ENCODE measurements at regions of chr4 and their contacts with region 1.

Region 1: DNA sequence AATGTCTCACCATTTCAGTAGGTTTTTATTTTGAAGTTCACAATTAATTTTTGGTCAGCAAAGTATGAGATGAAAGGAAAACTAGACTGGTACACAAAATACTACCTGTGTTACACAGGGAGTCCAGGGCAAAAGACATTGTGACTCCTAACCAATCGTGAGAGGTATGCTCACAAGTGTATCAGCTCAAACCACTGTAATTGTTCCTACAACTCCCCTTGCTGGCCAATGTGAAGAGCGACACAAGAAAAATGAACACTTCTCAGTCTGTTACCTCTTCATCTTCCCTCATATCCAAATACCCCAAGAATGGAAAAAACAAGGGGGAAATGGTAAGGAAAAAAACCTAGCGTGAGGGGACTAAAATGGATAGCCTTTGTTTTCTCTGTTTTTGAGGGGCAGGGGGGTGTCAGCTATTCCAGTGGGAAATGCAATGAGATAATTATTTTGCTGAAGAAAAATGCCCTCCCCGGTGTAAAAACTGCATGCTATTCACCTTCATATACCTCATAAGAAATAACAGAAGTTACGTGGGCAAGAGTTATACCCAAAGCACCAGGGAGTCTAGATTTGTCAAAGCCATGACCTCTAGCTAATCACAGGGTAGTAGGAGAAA is 30.6 kb upstream of the NSUN7 start:
- DNase-seq: peak; percentile 17
- ATAC-seq: peak; percentile 66
- H3K4me3 Mint-ChIP-seq: no peak overlapping the region
- H3K27ac Mint-ChIP-seq: peak overlapping the region; percentile 40
- H3K4me1 Mint-ChIP-seq: peaks cover 15% of the 10 kb centered on the region
- H3K27me3 Mint-ChIP-seq: no peaks in the 10 kb centered on the region

Region 2: DNA sequence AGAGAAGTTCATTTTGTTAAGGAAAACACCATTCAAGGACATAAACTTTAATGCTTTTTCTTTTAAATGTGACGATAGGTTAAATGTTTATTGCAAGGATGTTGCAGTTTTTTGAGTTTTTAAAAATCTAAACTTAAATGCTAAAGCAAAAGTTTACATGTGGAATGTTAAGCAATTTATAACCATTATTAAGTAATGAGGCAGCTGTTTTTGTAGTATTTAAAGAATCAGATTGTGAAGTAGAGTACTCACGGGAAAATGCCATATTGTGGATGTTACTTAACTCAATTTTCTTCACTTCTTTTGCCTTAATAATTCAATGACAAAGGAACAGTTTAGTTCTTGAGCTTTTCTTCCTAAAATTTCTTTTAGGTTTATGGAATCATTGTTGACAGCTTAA is 977.7 kb before region 1 on chr4:
- CTCF ChIA-PET with region 1: no interaction called
- POLR2A ChIA-PET with region 1: no interaction called
- intact Hi-C with region 1: no loop called
- DNase-seq: no peak
- ATAC-seq: no peak
- H3K4me3 Mint-ChIP-seq: no peak overlapping the region
- H3K27ac Mint-ChIP-seq: no peak overlapping the region
- H3K4me1 Mint-ChIP-seq: peaks cover 8% of the 10 kb centered on the region
- H3K27me3 Mint-ChIP-seq: no peaks in the 10 kb centered on the region

Region 3: DNA sequence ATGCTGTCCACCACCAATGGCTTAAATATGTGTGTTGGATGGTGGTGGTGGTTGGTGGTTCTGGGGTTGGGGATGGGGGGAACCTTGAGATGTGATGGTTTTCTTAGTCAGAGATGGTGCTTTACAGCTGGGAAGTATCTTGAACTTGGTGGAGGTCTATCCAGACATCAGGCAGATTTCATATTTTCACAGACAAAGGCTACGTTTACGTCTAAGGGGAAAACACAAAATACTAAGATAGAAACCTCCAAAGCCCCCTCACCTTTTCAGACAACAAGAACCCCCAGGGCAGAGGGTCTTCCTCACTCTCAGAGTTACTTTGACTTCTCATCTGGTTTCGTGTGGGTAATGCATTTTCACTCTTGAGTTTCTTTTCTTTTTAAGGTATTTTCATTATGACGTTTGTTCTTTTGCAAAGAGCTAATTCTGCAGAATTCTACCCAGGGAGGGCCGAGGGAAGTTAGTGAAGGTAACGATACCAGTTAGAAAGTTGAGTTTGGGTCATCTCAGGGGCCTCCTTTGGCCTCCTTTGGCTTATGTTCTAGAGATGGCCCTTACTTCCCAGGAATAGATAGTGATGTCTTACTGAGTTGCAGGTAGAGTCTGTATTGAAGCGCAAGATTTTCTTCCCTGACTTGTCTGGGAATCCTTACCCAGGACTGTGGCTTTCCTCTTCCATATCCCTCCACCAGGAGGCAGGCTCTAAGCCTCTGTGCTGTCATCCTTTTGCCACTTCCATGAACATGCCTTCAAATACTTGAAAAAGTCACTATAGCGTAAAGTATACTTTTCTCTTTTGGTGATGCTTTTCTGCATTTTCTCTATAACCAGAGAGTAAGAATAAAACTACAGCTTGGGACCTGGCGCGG is 490.4 kb before region 1 on chr4:
- CTCF ChIA-PET with region 1: no interaction called
- POLR2A ChIA-PET with region 1: no interaction called
- intact Hi-C with region 1: loop called in 1 of 2 experiments (anchors 5 kb)
- DNase-seq: peak; percentile 64
- ATAC-seq: peak; percentile 34
- H3K4me3 Mint-ChIP-seq: peak overlapping the region; percentile 61
- H3K27ac Mint-ChIP-seq: peak overlapping the region; percentile 96
- H3K4me1 Mint-ChIP-seq: peaks cover 93% of the 10 kb centered on the region
- H3K27me3 Mint-ChIP-seq: no peaks in the 10 kb centered on the region

Region 4: DNA sequence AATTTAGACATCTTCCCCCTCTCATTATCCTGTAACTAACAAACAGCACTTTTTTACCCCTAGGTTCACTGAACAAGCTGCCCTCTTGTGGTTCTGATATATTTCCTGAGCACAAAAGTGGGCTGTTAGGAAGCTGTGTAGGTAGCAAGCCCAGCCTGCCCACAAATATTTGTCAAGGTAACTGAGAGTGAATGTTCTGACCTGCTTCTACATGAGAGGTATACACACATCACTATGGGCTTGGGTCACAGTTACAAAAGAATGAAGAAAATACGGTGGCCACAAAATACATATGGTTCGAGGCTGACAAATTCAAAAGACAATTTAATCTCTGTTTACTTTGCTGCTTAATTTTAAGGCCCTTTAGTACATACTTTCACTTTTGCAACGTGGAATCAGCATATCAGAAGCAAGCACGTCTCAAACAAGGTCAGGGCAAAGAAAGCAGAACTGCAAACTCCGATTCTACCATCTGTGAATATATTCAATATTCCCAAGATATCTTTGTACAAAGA is 168.1 kb before region 1 on chr4:
- CTCF ChIA-PET with region 1: interaction called, 4 read pairs
- POLR2A ChIA-PET with region 1: no interaction called
- intact Hi-C with region 1: loop called (anchors 1 to 5 kb)
- DNase-seq: peak; percentile 20
- ATAC-seq: peak; percentile 48
- H3K4me3 Mint-ChIP-seq: peak overlapping the region; percentile 55
- H3K27ac Mint-ChIP-seq: peak overlapping the region; percentile 52
- H3K4me1 Mint-ChIP-seq: peaks cover 27% of the 10 kb centered on the region
- H3K27me3 Mint-ChIP-seq: no peaks in the 10 kb centered on the region

Region 5: DNA sequence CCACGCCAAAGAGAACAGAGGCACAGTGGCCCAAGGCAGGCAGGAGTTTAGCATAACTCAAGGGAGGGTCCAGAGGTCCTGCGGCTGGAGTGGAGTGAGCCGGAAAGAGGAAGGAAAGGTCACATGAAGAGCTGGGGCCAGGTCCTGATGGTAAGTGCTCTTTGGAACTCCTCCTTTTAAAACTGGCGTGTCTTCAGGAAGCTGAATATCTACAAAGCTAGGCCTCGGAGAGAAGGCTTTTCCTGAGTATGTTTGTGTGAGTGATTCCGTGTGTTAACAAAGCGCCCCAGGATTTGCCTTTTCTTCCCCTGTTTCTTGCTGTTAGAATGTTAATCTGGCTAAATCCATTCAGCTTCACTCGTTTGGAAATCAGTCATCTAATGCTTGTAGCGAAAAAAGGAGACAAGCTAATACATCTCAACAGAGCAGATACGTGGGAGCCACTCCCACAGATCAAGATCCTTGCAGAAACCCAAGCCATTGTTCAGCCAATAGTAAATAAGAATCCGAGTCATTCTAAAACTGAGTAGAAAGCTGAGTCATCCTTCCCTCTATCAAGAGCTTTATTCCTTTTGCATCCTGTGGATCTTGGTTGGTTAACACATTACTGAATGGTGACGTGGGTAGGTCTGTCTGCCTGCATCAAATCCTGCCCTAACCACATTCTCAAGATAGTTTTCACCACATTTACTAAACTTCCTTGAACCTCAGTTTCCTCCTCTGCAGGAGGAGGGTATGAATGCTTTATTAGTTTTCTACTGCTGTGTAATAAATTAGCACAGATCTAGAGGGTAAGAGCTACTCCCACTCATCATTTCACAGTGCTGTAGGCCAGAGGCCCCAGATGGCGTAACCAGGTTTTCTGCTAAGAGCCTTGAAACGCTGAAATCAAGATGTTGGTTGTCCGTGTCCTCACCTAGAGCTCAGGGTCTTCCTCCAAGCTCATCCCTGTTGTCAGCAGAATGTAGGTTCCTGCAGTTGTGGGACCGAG is 46.3 kb before region 1 on chr4:
- CTCF ChIA-PET with region 1: interaction called, 16 read pairs
- POLR2A ChIA-PET with region 1: no interaction called
- intact Hi-C with region 1: loop called (anchors 1 to 5 kb)
- DNase-seq: peak; percentile 70
- ATAC-seq: peak; percentile 87
- H3K4me3 Mint-ChIP-seq: peak overlapping the region; percentile 57
- H3K27ac Mint-ChIP-seq: peak overlapping the region; percentile 93
- H3K4me1 Mint-ChIP-seq: peaks cover 63% of the 10 kb centered on the region
- H3K27me3 Mint-ChIP-seq: no peaks in the 10 kb centered on the region

Region 6: GRCh38 chr4:40699648-40700047 is 19.5 kb before region 1 on chr4:
- CTCF ChIA-PET with region 1: interaction called, 15 read pairs
- POLR2A ChIA-PET with region 1: no interaction called
- intact Hi-C with region 1: loop called (anchors 1 to 2 kb)
- DNase-seq: peak; percentile 27
- ATAC-seq: peak; percentile 52
- H3K4me3 Mint-ChIP-seq: no peak overlapping the region
- H3K27ac Mint-ChIP-seq: peak overlapping the region; percentile 51
- H3K4me1 Mint-ChIP-seq: peaks cover 39% of the 10 kb centered on the region
- H3K27me3 Mint-ChIP-seq: no peaks in the 10 kb centered on the region

Region 7: DNA sequence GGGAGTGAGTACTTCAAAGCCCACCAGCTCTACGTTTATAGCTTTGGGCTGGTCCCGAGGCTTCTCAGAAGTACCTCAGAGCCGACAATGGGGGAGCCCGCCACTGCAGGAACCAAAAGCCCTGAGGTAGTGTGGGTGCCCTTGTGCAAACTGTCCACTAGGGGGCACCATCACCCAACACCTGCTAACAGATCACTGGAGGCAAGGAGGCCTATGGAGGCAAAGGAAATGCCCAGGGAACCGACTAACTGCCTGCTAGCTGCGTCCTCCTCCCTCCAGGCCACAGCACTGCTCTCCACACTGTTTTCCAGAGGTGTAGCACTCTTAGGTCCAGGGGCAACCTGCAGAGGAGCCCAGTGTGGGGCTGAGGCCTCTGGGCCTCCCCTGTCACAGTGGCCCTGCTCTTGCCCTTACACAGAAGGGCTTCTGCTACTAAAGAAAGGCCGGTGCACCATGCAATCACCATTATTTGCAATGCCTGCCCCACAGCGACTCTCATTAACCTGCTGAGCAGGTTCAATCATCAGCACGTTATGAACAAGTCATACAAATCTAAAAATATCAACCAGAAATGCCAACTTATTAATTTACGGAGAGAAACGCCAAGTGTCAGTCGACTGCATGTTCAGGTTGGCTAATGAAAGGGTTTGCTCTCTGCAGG is 189.7 kb after region 1 on chr4:
- CTCF ChIA-PET with region 1: no interaction called
- POLR2A ChIA-PET with region 1: no interaction called
- intact Hi-C with region 1: loop called in 1 of 2 experiments (anchors 5 kb)
- DNase-seq: peak; percentile 90
- ATAC-seq: peak; percentile 85
- H3K4me3 Mint-ChIP-seq: peak overlapping the region; percentile 26
- H3K27ac Mint-ChIP-seq: peak overlapping the region; percentile 95
- H3K4me1 Mint-ChIP-seq: peaks cover 36% of the 10 kb centered on the region
- H3K27me3 Mint-ChIP-seq: no peaks in the 10 kb centered on the region